ENCODE measurements at regions of chr13 and their contacts with region 1.

Region 1: DNA sequence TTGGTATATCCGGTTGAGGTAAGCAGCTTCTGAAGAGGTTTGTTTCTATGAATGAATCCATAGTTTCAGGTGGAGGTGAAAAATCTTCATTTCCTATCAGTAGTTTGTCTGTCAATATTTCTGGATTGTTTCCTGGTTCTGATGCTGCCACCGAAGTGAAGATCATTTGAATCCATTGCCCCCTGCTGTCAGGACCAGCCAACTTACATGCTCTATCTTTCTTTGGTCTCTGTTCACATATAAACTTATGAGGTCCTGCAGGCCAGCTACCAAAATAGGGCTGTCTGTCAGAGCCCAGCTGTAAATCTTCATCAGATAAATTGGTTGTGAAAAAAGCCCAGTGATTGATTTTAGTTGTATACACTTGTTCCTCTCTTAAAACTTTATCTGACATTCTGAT is 15.2 kb upstream of the N4BP2L1 start:
- DNase-seq: peak; percentile 76
- ATAC-seq: peak; percentile 88
- H3K4me3 ChIP-seq: no peak overlapping the region
- H3K4me3 Mint-ChIP-seq: peak overlapping the region; percentile 12
- H3K27ac ChIP-seq: peak overlapping the region; percentile 19 to 55
- H3K27ac Mint-ChIP-seq: peak overlapping the region; percentile 67
- H3K4me1 ChIP-seq: peaks cover 13 to 15% of the 10 kb centered on the region in 2 donors
- H3K4me1 Mint-ChIP-seq: peaks cover 21% of the 10 kb centered on the region
- H3K27me3 ChIP-seq: no peaks in the 10 kb centered on the region
- H3K27me3 Mint-ChIP-seq: no peaks in the 10 kb centered on the region
- CTCF ChIP-seq: peak; percentile 72

Region 2: DNA sequence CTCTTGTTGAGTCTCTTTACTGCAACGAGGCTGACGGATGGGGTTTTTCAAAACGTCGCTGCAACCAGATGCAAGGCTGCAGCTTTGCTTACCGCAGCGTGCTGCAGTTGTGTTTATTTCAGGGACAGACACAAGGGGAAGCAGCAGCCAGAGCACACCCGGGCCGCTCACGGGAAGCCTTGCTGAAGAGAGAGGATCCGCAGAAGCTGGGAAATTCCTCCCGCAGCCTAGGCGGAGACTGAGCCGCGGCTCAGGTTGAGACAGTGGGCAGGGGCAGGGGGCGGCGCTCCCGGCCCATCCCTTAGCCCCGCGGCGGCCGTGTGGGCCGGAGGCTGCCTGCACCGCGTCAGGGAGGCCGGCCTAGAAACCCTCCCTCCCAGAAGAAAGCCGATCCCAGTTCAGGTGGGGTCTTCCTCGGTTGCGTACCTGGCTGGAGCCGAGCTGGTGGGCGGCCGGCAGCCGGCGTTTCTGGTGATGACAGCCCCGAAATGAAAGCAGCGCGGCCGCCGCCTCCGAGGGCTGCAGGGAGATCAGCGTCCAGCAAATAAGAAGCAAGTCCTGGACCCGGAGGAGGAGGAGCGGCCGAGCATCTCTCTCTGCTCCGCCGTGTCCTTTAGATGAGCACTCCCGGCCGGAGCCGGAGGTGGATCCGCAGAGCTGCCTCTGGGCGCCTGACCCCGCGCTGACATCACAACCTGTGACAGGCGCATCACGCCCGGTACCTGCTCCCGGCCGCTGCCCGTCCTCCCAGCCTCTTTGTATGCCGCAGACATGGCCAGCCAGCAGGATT is 411.9 kb before region 1 on chr13 and contains the start of gene FRY:
- CTCF ChIA-PET with region 1: no interaction called
- POLR2A ChIA-PET with region 1: no interaction called
- intact Hi-C with region 1: loop called (anchors 10 kb)
- DNase-seq: peak; percentile 71
- ATAC-seq: peak; percentile 71
- H3K4me3 ChIP-seq: peak within 1 kb of the TSS; percentile 66 to 87 (median 68)
- H3K4me3 Mint-ChIP-seq: peak within 1 kb of the TSS; percentile 76
- H3K27ac ChIP-seq: peak within 1 kb of the TSS in 1 of 2 donors; percentile 58
- H3K27ac Mint-ChIP-seq: peak within 1 kb of the TSS; percentile 79
- H3K4me1 ChIP-seq: peaks cover 8 to 10% of the 10 kb centered on the region in 2 donors
- H3K4me1 Mint-ChIP-seq: peaks cover 23% of the 10 kb centered on the region
- H3K27me3 ChIP-seq: peaks cover 0 to 6% (median 0%) of the 10 kb centered on the region in 4 experiments
- H3K27me3 Mint-ChIP-seq: no peaks in the 10 kb centered on the region
- CTCF ChIP-seq: no peak
- total RNA-seq, gene FRY: 6.3 and 7.8 TPM in 2 replicates

Region 3: DNA sequence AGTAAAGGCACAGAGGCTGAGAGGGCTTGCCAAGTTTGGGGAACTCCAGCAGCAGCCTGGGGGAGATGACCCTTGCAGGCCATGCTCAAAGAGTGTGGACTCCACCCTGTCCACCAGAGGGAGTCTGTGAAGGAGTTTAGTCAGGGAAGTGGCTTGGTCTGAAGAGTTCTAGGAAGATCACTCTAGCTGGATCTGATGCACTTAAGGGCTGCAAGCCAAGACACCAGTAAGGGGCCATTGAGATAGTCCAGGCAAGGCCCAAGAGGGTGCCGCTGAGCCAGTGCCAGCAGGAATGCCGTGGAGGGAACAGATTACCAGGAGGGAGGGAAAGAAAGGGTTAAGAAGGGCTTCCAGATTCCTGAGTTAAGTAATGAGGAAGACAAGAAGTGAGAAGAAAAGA is 196.6 kb before region 1 on chr13:
- CTCF ChIA-PET with region 1: interaction called, 3 read pairs
- POLR2A ChIA-PET with region 1: no interaction called
- intact Hi-C with region 1: loop called (anchors 2 kb)
- DNase-seq: peak; percentile 46
- ATAC-seq: peak; percentile 53
- H3K4me3 ChIP-seq: no peak overlapping the region
- H3K4me3 Mint-ChIP-seq: no peak overlapping the region
- H3K27ac ChIP-seq: no peak overlapping the region
- H3K27ac Mint-ChIP-seq: no peak overlapping the region
- H3K4me1 ChIP-seq: no peaks in the 10 kb centered on the region
- H3K4me1 Mint-ChIP-seq: no peaks in the 10 kb centered on the region
- H3K27me3 ChIP-seq: no peaks in the 10 kb centered on the region
- H3K27me3 Mint-ChIP-seq: no peaks in the 10 kb centered on the region
- CTCF ChIP-seq: peak; percentile 58

Region 4: DNA sequence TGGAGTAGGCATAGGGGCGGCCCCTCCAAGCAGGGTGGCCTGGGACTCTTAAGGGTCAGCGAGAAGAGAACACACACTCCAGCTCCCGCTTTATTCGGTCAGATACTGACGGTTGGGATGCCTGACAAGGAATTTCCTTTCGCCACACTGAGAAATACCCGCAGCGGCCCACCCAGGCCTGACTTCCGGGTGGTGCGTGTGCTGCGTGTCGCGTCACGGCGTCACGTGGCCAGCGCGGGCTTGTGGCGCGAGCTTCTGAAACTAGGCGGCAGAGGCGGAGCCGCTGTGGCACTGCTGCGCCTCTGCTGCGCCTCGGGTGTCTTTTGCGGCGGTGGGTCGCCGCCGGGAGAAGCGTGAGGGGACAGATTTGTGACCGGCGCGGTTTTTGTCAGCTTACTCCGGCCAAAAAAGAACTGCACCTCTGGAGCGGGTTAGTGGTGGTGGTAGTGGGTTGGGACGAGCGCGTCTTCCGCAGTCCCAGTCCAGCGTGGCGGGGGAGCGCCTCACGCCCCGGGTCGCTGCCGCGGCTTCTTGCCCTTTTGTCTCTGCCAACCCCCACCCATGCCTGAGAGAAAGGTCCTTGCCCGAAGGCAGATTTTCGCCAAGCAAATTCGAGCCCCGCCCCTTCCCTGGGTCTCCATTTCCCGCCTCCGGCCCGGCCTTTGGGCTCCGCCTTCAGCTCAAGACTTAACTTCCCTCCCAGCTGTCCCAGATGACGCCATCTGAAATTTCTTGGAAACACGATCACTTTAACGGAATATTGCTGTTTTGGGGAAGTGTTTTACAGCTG is 127.7 kb before region 1 on chr13 and contains the starts of genes BRCA2 and ZAR1L:
- CTCF ChIA-PET with region 1: interaction called, 5 read pairs
- POLR2A ChIA-PET with region 1: no interaction called
- intact Hi-C with region 1: loop called (anchors 2 kb)
- DNase-seq: peak; percentile 94
- ATAC-seq: peak; percentile 90
- H3K4me3 ChIP-seq: peak within 1 kb of the TSS; percentile 74 to 91 (median 82)
- H3K4me3 Mint-ChIP-seq: peak within 1 kb of the TSS; percentile 91
- H3K27ac ChIP-seq: peak within 1 kb of the TSS; percentile 99 to 100
- H3K27ac Mint-ChIP-seq: peak within 1 kb of the TSS; percentile 99
- H3K4me1 ChIP-seq: peaks cover 7 to 20% of the 10 kb centered on the region in 2 donors
- H3K4me1 Mint-ChIP-seq: peaks cover 15% of the 10 kb centered on the region
- H3K27me3 ChIP-seq: no peaks in the 10 kb centered on the region
- H3K27me3 Mint-ChIP-seq: no peaks in the 10 kb centered on the region
- CTCF ChIP-seq: no peak
- total RNA-seq, gene BRCA2: 6.0 and 7.5 TPM in 2 replicates
- total RNA-seq, gene ZAR1L: not detected in 2 replicates

Region 5: DNA sequence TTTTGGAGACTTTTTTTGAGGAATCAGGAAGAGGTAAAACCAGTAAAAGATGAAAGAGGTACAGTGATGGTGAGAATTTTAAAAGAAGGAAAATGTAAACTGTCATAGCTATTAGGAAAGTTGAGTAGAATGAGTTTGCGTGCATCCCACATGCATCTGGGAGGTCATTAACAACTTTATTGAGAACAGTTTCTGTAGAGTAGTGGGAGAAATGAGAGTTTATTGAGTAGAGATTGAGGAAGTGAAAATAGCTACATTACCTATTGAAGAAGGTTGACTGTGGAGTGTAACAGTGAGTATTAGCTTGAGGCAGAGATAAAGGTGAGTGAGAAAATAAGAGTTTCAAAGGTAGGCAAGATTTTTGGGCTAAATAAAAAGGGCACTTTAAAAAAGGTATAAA is 89.1 kb before region 1 on chr13:
- CTCF ChIA-PET with region 1: no interaction called
- POLR2A ChIA-PET with region 1: no interaction called
- intact Hi-C with region 1: no loop called
- DNase-seq: peak; percentile 8
- ATAC-seq: no peak
- H3K4me3 ChIP-seq: no peak overlapping the region
- H3K4me3 Mint-ChIP-seq: no peak overlapping the region
- H3K27ac ChIP-seq: no peak overlapping the region
- H3K27ac Mint-ChIP-seq: no peak overlapping the region
- H3K4me1 ChIP-seq: no peaks in the 10 kb centered on the region
- H3K4me1 Mint-ChIP-seq: no peaks in the 10 kb centered on the region
- H3K27me3 ChIP-seq: no peaks in the 10 kb centered on the region
- H3K27me3 Mint-ChIP-seq: no peaks in the 10 kb centered on the region
- CTCF ChIP-seq: no peak

Region 6: GRCh38 chr13:32427852-32428580 is 15.1 kb before region 1 on chr13 and contains the start of gene N4BP2L1:
- CTCF ChIA-PET with region 1: interaction called, 12 read pairs
- POLR2A ChIA-PET with region 1: interaction called, 4 read pairs
- intact Hi-C with region 1: loop called (anchors 1 kb)
- DNase-seq: peak; percentile 93
- ATAC-seq: peak; percentile 74
- H3K4me3 ChIP-seq: peak within 1 kb of the TSS; percentile 73 to 93 (median 80)
- H3K4me3 Mint-ChIP-seq: peak within 1 kb of the TSS; percentile 88
- H3K27ac ChIP-seq: peak within 1 kb of the TSS; percentile 95 to 98
- H3K27ac Mint-ChIP-seq: peak within 1 kb of the TSS; percentile 96
- H3K4me1 ChIP-seq: peaks cover 28 to 47% of the 10 kb centered on the region in 2 donors
- H3K4me1 Mint-ChIP-seq: peaks cover 48% of the 10 kb centered on the region
- H3K27me3 ChIP-seq: no peaks in the 10 kb centered on the region
- H3K27me3 Mint-ChIP-seq: no peaks in the 10 kb centered on the region
- CTCF ChIP-seq: no peak
- total RNA-seq, gene N4BP2L1: 52.8 and 59.0 TPM in 2 replicates